ENCODE measurements at regions of chr12 and their contacts with region 1.

Region 1: DNA sequence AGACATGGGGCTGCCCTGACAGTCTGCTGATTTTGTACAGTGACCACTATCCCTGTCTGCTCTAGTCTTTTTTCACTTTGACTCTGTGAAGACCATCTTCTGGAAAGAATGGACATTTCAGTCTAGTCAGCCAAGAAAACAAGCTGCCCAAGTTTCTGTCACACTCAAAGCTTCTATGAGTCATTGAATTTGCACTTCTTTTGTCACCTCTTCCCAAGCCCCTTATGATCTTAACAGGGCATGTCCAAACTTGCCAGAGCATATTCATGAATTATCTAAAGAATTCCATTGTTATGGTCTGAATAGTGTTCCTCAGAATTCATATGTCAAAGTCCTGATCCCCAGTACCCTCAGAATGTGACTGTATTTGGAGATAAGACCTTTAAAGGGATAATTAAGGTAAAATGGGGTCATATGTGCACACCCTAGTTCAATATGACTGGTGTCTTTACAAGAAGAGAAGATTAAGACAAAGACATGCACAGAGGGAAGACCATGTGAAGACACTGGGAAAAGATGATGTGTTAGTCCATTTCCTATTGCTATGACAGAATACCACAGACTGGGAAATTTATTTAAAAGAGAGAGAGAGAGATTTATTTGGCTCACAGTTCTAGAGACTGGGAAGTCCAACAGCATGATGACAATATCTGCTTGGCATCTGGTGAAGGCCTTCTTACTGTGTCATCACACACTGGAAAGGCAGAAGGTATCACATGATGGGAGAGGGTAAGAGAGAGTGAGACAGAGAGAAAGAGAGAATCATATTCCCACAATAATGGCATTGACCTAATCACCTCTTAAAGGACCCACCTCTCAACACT is 242.6 kb downstream of the BTG1 start:
- DNase-seq: no peak
- ATAC-seq: no peak
- H3K4me3 ChIP-seq: no peak overlapping the region
- H3K4me3 Mint-ChIP-seq: no peak overlapping the region
- H3K27ac ChIP-seq: no peak overlapping the region
- H3K27ac Mint-ChIP-seq: peak overlapping the region in 4 of 9 donors; percentile 20 to 31 (median 24)
- H3K4me1 ChIP-seq: no peaks in the 10 kb centered on the region
- H3K4me1 Mint-ChIP-seq: peaks cover 2 to 52% (median 37%) of the 10 kb centered on the region in 7 donors
- H3K27me3 ChIP-seq: no peaks in the 10 kb centered on the region
- H3K27me3 Mint-ChIP-seq: no peaks in the 10 kb centered on the region

Region 2: DNA sequence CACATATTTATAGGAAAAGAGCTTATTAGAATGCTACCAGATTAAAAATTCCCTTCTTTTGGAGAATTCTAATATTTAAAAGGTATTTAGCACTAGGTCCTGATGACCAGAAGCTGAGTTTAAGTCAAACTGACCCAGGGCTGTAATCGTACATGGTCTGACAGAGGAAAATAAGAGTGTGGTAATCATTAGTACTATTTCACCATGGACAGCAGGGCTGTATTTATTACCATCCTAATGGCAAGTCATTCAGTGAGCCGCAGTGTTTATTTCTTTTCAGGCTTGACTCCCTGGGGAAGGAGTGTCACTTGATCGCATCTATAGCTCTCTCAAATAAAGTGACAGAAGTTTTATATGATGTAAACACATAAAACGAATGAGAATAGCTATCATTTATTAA is 19.3 kb before region 1 on chr12:
- CTCF ChIA-PET with region 1: no interaction called
- POLR2A ChIA-PET with region 1: interaction called, 6 read pairs
- intact Hi-C with region 1: loop called in 1 of 2 experiments (anchors 2 kb)
- DNase-seq: no peak
- ATAC-seq: no peak
- H3K4me3 ChIP-seq: no peak overlapping the region
- H3K4me3 Mint-ChIP-seq: no peak overlapping the region
- H3K27ac ChIP-seq: no peak overlapping the region
- H3K27ac Mint-ChIP-seq: no peak overlapping the region
- H3K4me1 ChIP-seq: peaks cover 16 to 18% of the 10 kb centered on the region in 2 donors
- H3K4me1 Mint-ChIP-seq: peaks cover 16 to 48% (median 40%) of the 10 kb centered on the region in 7 donors
- H3K27me3 ChIP-seq: no peaks in the 10 kb centered on the region
- H3K27me3 Mint-ChIP-seq: peaks cover 0 to 3% (median 0%) of the 10 kb centered on the region in 5 donors

Region 3: GRCh38 chr12:91978143-91978542 is 75.1 kb after region 1 on chr12:
- CTCF ChIA-PET with region 1: no interaction called
- POLR2A ChIA-PET with region 1: interaction called, 3 read pairs
- intact Hi-C with region 1: loop called in 1 of 2 experiments (anchors 2 kb)
- DNase-seq: peak in 7 of 9 donors; percentile 75 to 94 (median 85)
- ATAC-seq: peak; percentile 93
- H3K4me3 ChIP-seq: no peak overlapping the region
- H3K4me3 Mint-ChIP-seq: peak overlapping the region; percentile 3 to 62 (median 46)
- H3K27ac ChIP-seq: peak overlapping the region; percentile 64
- H3K27ac Mint-ChIP-seq: peak overlapping the region; percentile 58 to 96 (median 82)
- H3K4me1 ChIP-seq: peaks cover 6 to 16% of the 10 kb centered on the region in 2 donors
- H3K4me1 Mint-ChIP-seq: peaks cover 12 to 78% (median 48%) of the 10 kb centered on the region in 7 donors
- H3K27me3 ChIP-seq: no peaks in the 10 kb centered on the region
- H3K27me3 Mint-ChIP-seq: no peaks in the 10 kb centered on the region

Region 4: GRCh38 chr12:92111256-92111655 is 208.2 kb after region 1 on chr12:
- CTCF ChIA-PET with region 1: no interaction called
- POLR2A ChIA-PET with region 1: no interaction called
- intact Hi-C with region 1: no loop called
- DNase-seq: no peak
- ATAC-seq: no peak
- H3K4me3 ChIP-seq: peak overlapping the region; percentile 38
- H3K4me3 Mint-ChIP-seq: peak overlapping the region; percentile 8 to 91 (median 76)
- H3K27ac ChIP-seq: peak overlapping the region; percentile 51
- H3K27ac Mint-ChIP-seq: peak overlapping the region in 8 of 9 donors; percentile 24 to 92 (median 84)
- H3K4me1 ChIP-seq: peaks cover 22 to 68% of the 10 kb centered on the region in 2 donors
- H3K4me1 Mint-ChIP-seq: peaks cover 54 to 98% (median 91%) of the 10 kb centered on the region in 7 donors
- H3K27me3 ChIP-seq: no peaks in the 10 kb centered on the region
- H3K27me3 Mint-ChIP-seq: no peaks in the 10 kb centered on the region

Measured in naive thymus-derived CD4-positive, alpha-beta T cell (primary cell).